Activated CD4-positive, alpha-beta memory T cell treated with anti-CD3 and anti-CD28 coated beads, Interleukin-2, amount 10 ng/mL, durations not matched to agents 7 days and 5 days (primary cell): ENCODE measurements at regions of chr12 and their contacts with region 1.

Region 1: GRCh38 chr12:121917979-121918678 is at the start of gene CFAP251:
- DNase-seq: peak; percentile 98
- H3K4me3 Mint-ChIP-seq: peak within 1 kb of the TSS; percentile 77
- H3K27ac Mint-ChIP-seq: peak within 1 kb of the TSS; percentile 79
- H3K4me1 Mint-ChIP-seq: peaks cover 14% of the 10 kb centered on the region
- H3K27me3 Mint-ChIP-seq: no peaks in the 10 kb centered on the region
- total RNA-seq, gene CFAP251: 1.9 to 2.2 TPM

Region 2: GRCh38 chr12:121849665-121850064 is 68.5 kb before region 1 on chr12:
- CTCF ChIA-PET with region 1: no interaction called
- POLR2A ChIA-PET with region 1: no interaction called
- DNase-seq: no peak
- H3K4me3 Mint-ChIP-seq: no peak overlapping the region
- H3K27ac Mint-ChIP-seq: no peak overlapping the region
- H3K4me1 Mint-ChIP-seq: no peaks in the 10 kb centered on the region
- H3K27me3 Mint-ChIP-seq: no peaks in the 10 kb centered on the region

Region 3: DNA sequence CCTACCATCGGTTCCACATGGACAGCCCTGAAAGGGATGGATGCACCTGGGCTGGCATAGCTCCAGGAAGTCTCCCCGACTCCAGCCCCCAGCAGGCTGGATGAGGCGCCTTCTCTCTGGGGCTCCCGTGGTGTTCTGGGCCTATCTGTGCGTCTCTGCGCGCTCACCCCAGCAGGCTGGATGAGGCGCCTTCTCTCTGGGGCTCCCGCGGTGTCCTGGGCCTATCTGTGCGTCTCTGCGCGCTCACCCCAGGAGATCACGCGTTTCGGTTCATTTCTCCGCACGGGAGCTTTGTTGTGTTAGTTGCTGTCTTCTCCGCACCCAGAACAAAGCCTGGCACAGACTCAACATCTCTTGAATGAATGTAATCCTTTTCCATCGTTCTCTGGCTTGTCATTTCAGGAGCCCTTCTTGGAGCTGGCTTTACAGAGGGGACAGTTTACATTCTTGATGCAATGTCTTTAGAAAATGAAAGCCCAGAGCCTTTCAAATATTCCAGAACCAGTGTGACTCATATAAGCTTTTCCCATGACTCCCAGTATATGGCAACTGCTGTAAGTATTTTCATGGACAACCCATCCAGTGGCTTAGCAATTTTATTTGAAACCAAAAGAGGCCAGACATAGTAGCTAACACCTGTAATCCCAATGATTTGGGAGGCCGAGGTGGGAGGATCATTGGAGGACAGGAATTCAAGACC is 40.6 kb after region 1 on chr12:
- CTCF ChIA-PET with region 1: no interaction called
- POLR2A ChIA-PET with region 1: no interaction called
- DNase-seq: no peak
- H3K4me3 Mint-ChIP-seq: no peak overlapping the region
- H3K27ac Mint-ChIP-seq: no peak overlapping the region
- H3K4me1 Mint-ChIP-seq: no peaks in the 10 kb centered on the region
- H3K27me3 Mint-ChIP-seq: peaks cover 2% of the 10 kb centered on the region

Region 4: GRCh38 chr12:121992059-121992879 is 74.1 kb after region 1 on chr12:
- CTCF ChIA-PET with region 1: interaction called, 24 read pairs
- POLR2A ChIA-PET with region 1: interaction called, 3 read pairs
- DNase-seq: peak; percentile 69
- H3K4me3 Mint-ChIP-seq: no peak overlapping the region
- H3K27ac Mint-ChIP-seq: peak overlapping the region; percentile 82
- H3K4me1 Mint-ChIP-seq: peaks cover 19% of the 10 kb centered on the region
- H3K27me3 Mint-ChIP-seq: peaks cover 17% of the 10 kb centered on the region

Region 5: GRCh38 chr12:122004633-122005071 is 86.5 kb after region 1 on chr12:
- CTCF ChIA-PET with region 1: interaction called, 22 read pairs
- POLR2A ChIA-PET with region 1: interaction called, 3 read pairs
- DNase-seq: no peak
- H3K4me3 Mint-ChIP-seq: no peak overlapping the region
- H3K27ac Mint-ChIP-seq: no peak overlapping the region
- H3K4me1 Mint-ChIP-seq: peaks cover 27% of the 10 kb centered on the region
- H3K27me3 Mint-ChIP-seq: peaks cover 22% of the 10 kb centered on the region